Activated T-helper 1 cell treated with anti-CD3 and anti-CD28 coated beads, Interleukin-12 subunit alpha, Interleukin-12 subunit beta, Interleukin-2, Interleukin-4 antibody, amounts not matched to agents 30 ng/mL and 10 ng/mL and 1 ng/mL, durations not matched to agents 14 hours and 24 hours and 36 hours (primary cell): ENCODE measurements at regions of chr1 and their contacts with region 1.

Region 1: GRCh38 chr1:101288491-101288944 is 51.7 kb downstream of the S1PR1 start:
- DNase-seq: peak; percentile 50
- H3K4me3 Mint-ChIP-seq: no peak overlapping the region
- H3K27ac Mint-ChIP-seq: no peak overlapping the region
- H3K4me1 Mint-ChIP-seq: peaks cover 83% of the 10 kb centered on the region
- H3K27me3 Mint-ChIP-seq: peaks cover 1% of the 10 kb centered on the region

Region 2: GRCh38 chr1:99786751-99787501 is 1501.6 kb before region 1 on chr1:
- intact Hi-C with region 1: loop called (anchors 10 kb)
- DNase-seq: no peak
- H3K4me3 Mint-ChIP-seq: no peak overlapping the region
- H3K27ac Mint-ChIP-seq: no peak overlapping the region
- H3K4me1 Mint-ChIP-seq: peaks cover 26% of the 10 kb centered on the region
- H3K27me3 Mint-ChIP-seq: peaks cover 45% of the 10 kb centered on the region

Region 3: DNA sequence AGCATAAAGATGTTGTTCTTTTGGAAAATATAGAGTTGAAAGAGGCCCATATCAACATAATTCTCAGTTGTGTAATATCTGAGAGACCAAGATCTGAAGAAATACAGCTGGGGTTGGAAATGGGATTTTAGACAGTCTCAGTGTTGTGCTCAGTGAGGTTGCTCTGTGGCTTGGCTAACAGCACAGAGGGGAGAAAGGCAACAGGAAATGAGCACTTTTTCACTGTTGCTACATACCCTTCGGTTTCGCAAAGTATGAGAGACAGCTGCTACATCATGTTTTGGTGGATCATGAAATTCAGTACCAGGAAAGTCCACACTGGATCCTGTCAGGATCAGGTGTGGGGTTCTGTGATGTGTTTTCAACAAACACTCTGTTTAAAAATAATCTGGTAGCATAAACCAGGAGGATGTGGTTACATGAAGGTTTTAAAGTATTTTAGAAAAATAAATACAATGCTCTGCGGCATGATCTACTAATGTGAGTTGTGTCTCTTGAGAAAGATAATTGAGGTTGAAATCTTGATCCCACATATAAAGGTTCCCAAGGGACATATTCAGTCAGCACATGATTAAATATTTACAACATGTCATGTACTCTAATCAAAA is 757.5 kb before region 1 on chr1:
- intact Hi-C with region 1: loop called (anchors 10 kb)
- DNase-seq: no peak
- H3K4me3 Mint-ChIP-seq: no peak overlapping the region
- H3K27ac Mint-ChIP-seq: peak overlapping the region; percentile 33
- H3K4me1 Mint-ChIP-seq: peaks cover 28% of the 10 kb centered on the region
- H3K27me3 Mint-ChIP-seq: peaks cover 19% of the 10 kb centered on the region

Region 4: GRCh38 chr1:100941098-100941527 is 347.4 kb before region 1 on chr1:
- intact Hi-C with region 1: loop called (anchors 1 kb)
- DNase-seq: peak; percentile 17
- H3K4me3 Mint-ChIP-seq: peak overlapping the region; percentile 58
- H3K27ac Mint-ChIP-seq: peak overlapping the region; percentile 99
- H3K4me1 Mint-ChIP-seq: peaks cover 37% of the 10 kb centered on the region
- H3K27me3 Mint-ChIP-seq: peaks cover 3% of the 10 kb centered on the region

Region 5: DNA sequence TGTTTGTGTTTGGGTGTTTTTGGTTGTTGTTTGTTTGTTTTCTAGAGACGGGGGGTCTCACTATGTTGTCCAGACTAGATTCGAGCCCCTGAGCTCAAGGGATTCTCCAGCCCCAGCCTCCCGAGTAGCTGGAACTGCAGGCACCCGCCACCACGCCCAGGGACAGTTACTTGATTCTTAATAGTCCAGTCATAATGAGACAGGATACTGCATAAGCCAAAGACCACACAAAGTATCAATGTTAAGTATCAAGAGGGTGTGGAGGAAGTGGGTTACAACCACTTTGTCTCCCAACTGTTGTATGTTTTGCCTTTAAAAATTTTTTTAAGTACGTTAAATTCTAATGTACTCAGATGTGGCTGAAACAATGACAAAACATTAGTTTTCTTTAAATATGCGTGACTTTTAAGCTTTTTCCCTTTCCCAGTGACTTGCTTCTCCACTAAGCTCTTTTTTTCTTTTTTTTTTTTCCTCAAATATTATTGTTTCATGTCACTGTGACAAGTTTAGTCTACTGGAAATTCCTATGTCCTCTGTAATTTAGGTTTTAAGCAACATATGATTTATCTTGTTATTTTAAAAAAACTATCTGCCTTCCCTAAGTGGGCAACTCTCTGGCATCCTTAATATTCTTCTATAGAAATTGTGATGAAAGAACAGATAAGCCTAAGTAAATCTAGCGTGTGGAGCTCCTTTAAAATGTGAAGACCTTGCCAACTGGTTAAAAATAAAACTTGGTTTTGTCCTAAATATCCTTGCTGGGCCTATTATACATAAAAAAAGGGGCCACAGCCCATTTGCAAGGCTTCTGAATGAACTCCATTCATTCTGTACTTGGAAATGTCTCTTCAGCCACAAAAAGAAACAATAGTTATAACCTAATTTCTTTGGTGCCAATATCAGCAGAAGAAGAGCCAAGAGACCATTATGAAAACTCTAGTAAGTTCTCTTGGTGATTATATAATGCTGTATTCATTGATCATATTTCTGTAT is 206.7 kb before region 1 on chr1:
- intact Hi-C with region 1: loop called (anchors 1 kb)
- DNase-seq: peak; percentile 58
- H3K4me3 Mint-ChIP-seq: peak overlapping the region; percentile 38
- H3K27ac Mint-ChIP-seq: peak overlapping the region; percentile 61
- H3K4me1 Mint-ChIP-seq: peaks cover 57% of the 10 kb centered on the region
- H3K27me3 Mint-ChIP-seq: no peaks in the 10 kb centered on the region

Region 6: GRCh38 chr1:101238681-101239094 is 49.8 kb before region 1 on chr1:
- intact Hi-C with region 1: loop called (anchors 1 kb)
- DNase-seq: peak; percentile 79
- H3K4me3 Mint-ChIP-seq: peak overlapping the region; percentile 97
- H3K27ac Mint-ChIP-seq: peak overlapping the region; percentile 95
- H3K4me1 Mint-ChIP-seq: peaks cover 77% of the 10 kb centered on the region
- H3K27me3 Mint-ChIP-seq: no peaks in the 10 kb centered on the region

Region 7: GRCh38 chr1:101357444-101357986 is 69.0 kb after region 1 on chr1:
- intact Hi-C with region 1: loop called (anchors 1 kb)
- DNase-seq: peak; percentile 69
- H3K4me3 Mint-ChIP-seq: no peak overlapping the region
- H3K27ac Mint-ChIP-seq: no peak overlapping the region
- H3K4me1 Mint-ChIP-seq: peaks cover 9% of the 10 kb centered on the region
- H3K27me3 Mint-ChIP-seq: peaks cover 23% of the 10 kb centered on the region